ENCODE measurements at regions of chr12 and their contacts with region 1.

Region 1: GRCh38 chr12:49296034-49296835 is 1.3 kb downstream of the PRPH start:
- DNase-seq: peak; percentile 84
- ATAC-seq: peak; percentile 58
- H3K4me3 Mint-ChIP-seq: peak overlapping the region; percentile 67
- H3K27ac Mint-ChIP-seq: no peak overlapping the region
- H3K4me1 Mint-ChIP-seq: peaks cover 30% of the 10 kb centered on the region
- H3K27me3 Mint-ChIP-seq: peaks cover 91% of the 10 kb centered on the region
- CTCF ChIP-seq: peak; percentile 88

Region 2: DNA sequence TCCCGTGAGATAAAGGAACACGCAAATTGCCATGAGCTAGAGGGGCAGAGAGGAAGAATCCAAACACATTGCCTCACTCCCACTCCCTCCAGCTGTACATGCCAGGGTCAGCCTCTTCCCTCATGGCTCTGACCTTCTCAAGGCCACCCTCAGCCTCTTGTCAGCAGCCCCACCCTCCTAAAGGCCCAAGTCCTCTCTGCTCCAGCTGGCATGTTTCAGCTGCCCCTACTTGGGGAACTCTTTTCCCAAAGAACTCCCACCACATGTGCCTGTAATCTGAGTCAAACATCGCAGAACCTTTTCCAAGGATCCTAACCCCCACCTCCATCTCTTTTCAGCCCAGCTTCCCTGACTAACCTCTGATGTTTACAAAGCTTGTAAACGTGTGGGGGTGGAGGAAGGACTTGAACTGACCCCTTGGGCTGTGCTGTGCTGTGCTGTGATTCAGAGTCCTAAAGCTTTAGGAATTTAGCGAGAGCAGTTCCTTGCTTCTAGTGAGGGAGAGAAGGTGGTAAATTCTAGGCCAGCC is 485.3 kb before region 1 on chr12:
- CTCF ChIA-PET with region 1: no interaction called
- POLR2A ChIA-PET with region 1: no interaction called
- DNase-seq: no peak
- ATAC-seq: no peak
- H3K4me3 Mint-ChIP-seq: no peak overlapping the region
- H3K27ac Mint-ChIP-seq: no peak overlapping the region; the same call in 1 of the 2 replicates
- H3K4me1 Mint-ChIP-seq: peaks cover 27% of the 10 kb centered on the region
- H3K27me3 Mint-ChIP-seq: peaks cover 37% of the 10 kb centered on the region
- CTCF ChIP-seq: no peak

Region 3: DNA sequence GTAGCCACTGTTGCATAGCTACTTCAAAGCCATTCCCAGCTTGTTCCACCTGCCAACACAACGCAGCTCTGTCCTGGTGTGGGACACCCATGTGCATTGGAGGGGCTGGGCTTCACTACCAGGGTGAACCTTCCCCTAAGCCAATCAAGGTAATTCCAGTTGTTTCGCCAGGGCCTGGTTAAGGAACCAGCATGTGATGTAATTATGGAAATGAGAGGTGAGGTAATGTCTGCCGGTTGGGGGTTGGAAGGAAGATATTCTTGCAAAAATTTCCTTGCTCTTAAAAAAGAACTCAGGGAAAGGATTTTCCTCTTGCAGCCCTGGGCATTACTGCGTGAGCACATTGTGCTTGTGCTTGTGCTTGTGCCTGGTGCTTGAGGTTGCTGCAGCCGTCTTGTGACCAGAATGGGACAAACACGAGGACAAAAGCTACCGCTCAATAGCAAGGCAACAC is 16.5 kb before region 1 on chr12:
- CTCF ChIA-PET with region 1: interaction called, 97 read pairs
- POLR2A ChIA-PET with region 1: interaction called, 3 read pairs
- DNase-seq: no peak
- ATAC-seq: peak; percentile 53
- H3K4me3 Mint-ChIP-seq: no peak overlapping the region
- H3K27ac Mint-ChIP-seq: no peak overlapping the region
- H3K4me1 Mint-ChIP-seq: peaks cover 23% of the 10 kb centered on the region
- H3K27me3 Mint-ChIP-seq: no peaks in the 10 kb centered on the region
- CTCF ChIP-seq: no peak

Region 4: GRCh38 chr12:49309391-49309790 is 13.2 kb after region 1 on chr12:
- CTCF ChIA-PET with region 1: interaction called, 15 read pairs
- POLR2A ChIA-PET with region 1: no interaction called
- DNase-seq: no peak
- ATAC-seq: no peak
- H3K4me3 Mint-ChIP-seq: no peak overlapping the region
- H3K27ac Mint-ChIP-seq: no peak overlapping the region
- H3K4me1 Mint-ChIP-seq: no peaks in the 10 kb centered on the region
- H3K27me3 Mint-ChIP-seq: peaks cover 45% of the 10 kb centered on the region
- CTCF ChIP-seq: no peak

Region 5: GRCh38 chr12:49322708-49323523 is 26.7 kb after region 1 on chr12 and contains the start of gene TROAP:
- CTCF ChIA-PET with region 1: interaction called, 77 read pairs
- POLR2A ChIA-PET with region 1: interaction called, 3 read pairs
- DNase-seq: peak; percentile 99
- ATAC-seq: peak; percentile 99
- H3K4me3 Mint-ChIP-seq: peak within 1 kb of the TSS; percentile 99
- H3K27ac Mint-ChIP-seq: peak within 1 kb of the TSS; percentile 91
- H3K4me1 Mint-ChIP-seq: peaks cover 15% of the 10 kb centered on the region
- H3K27me3 Mint-ChIP-seq: peaks cover 15% of the 10 kb centered on the region
- CTCF ChIP-seq: no peak
- total RNA-seq, gene TROAP: 78.5 to 89.2 TPM (median 80.0 TPM) in 3 replicates

Region 6: DNA sequence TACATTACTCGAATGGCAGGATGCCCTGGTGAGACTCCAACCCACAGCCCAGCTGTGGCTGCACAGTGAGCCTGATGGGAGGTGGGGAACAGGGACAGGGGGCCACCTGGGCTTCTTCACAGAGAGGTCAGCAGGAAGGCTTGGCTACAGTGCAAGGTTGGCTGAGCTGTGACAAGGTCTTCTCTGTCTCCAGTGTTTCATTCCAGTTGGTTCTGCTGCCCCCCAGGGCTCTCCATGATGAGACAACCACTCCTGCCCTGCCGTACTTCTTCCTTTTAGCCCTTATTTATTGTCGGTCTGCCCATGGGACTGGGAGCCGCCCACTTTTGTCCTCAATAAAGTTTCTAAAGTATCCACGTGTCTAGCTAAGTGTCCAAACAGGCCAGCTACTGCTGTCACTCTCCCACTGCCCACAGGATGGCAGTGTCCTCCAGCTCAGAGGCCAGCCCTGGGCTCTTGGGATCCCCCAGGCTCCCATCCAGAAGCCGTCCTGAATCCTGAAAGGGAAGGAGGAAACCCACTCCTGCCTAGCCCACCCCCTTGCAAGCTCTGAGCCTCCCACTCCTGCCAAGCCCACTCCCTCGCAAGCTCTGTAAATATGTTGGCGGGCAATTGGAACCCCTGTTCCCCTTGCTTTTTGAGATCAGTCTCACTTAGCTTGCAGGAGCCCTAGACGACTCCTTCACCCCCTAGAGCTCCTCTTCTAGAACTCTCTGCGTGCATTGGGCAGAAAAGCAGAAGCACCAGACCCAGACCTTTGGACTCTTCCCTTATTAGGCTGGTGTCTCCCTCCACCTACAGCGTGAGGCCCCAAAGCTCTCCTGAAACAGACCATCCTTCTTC is 35.4 kb after region 1 on chr12:
- CTCF ChIA-PET with region 1: interaction called, 122 read pairs
- POLR2A ChIA-PET with region 1: no interaction called
- DNase-seq: peak; percentile 77
- ATAC-seq: peak; percentile 76
- H3K4me3 Mint-ChIP-seq: peak overlapping the region; percentile 77; the same call in 1 of the 2 replicates
- H3K27ac Mint-ChIP-seq: no peak overlapping the region
- H3K4me1 Mint-ChIP-seq: peaks cover 20% of the 10 kb centered on the region
- H3K27me3 Mint-ChIP-seq: peaks cover 52% of the 10 kb centered on the region
- CTCF ChIP-seq: peak; percentile 42; the same call in 1 of the 2 replicates

Region 7: DNA sequence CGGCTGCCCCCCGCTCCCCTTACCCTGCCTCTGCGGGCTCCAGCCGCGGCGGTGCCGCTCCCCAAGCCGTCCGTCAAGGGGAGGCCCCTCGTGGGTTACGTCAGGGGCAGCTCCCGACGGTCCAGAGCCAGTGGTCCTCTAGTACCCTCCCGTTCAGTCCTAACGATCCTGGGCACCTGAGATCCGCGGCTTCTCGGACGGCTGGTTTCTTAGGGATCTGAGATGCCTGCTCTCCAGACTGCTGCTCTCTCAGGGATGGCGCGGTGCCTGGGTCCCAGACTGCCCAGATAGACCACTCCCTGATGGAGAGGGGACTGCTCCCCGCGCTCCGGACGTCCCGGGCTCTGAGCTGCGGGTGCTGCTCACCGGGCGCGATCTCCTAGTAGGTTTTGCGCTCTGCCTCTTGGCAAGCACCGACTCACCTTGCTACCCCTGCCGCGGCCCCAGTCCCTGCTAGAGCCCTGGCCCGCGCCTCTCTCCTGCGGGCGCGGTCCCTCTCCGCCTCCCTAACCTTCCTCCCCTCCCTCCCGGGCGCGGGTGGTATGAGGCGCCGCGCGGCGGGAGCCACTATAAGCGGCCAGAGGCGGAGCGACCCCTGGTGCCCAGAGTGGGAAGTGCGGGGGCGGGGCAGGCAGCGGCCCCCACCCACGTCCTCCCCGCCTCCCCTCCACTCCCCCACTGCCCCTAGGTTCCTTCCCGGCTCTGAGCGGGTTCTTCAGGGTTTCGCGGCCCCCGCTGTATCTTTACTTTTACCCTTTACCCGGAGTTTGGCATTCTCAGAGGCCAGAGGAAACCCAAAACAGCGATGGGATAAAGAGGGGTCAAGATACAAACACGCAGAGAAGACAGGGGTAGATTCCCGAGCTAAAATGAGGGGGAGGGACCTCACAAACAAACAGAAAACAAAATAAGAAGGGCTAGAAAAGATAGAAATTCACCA is 40.7 kb after region 1 on chr12 and contains the start of gene C1QL4:
- CTCF ChIA-PET with region 1: interaction called, 264 read pairs
- POLR2A ChIA-PET with region 1: interaction called, 9 read pairs
- DNase-seq: peak; percentile 93
- ATAC-seq: peak; percentile 55
- H3K4me3 Mint-ChIP-seq: peak within 1 kb of the TSS; percentile 70
- H3K27ac Mint-ChIP-seq: no peak within 1 kb of the TSS
- H3K4me1 Mint-ChIP-seq: peaks cover 56% of the 10 kb centered on the region
- H3K27me3 Mint-ChIP-seq: peaks cover 99% of the 10 kb centered on the region
- CTCF ChIP-seq: peak; percentile 97
- total RNA-seq, gene C1QL4: 0.92 to 1.2 TPM (median 1.2 TPM) in 3 replicates

Region 8: DNA sequence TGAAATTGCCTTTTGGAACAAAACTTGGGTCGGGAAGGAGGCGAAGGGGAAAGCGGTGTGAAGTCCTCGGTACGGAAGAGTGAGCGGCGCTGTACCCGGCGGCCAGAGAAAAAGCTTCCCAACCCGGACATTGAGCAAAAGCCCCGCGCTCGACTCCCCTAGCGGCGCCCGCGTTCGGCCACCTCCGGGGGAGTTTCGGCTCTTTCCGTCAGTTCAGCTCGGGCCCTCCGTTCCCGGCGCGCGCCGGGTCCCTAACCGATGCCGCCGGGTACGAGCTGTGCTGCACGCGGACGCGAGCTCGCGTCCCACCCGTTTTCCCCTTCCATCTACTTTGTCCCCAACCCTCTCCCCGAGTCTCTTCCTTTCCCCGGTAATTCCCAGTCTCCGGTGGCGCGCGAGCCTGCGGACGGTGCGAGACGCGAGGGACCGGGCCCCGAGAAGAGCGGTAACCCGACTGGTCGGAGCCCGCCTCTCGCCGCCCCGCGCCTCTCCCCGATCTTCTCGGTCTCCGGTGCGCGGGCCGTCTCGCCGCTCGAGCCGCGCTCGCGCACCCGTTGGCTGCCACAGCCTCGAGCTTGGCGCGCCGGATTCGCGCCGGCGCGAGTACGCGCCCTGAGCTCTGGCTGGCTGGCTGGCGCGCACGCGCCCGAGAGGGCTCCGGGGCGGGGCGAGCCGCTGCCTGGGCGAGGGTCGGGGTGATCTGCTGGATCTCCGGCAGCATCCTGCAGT is 70.6 kb after region 1 on chr12:
- CTCF ChIA-PET with region 1: interaction called, 13 read pairs
- POLR2A ChIA-PET with region 1: no interaction called
- DNase-seq: peak; percentile 92
- ATAC-seq: peak; percentile 89
- H3K4me3 Mint-ChIP-seq: peak overlapping the region; percentile 89
- H3K27ac Mint-ChIP-seq: peak overlapping the region; percentile 97
- H3K4me1 Mint-ChIP-seq: peaks cover 30% of the 10 kb centered on the region
- H3K27me3 Mint-ChIP-seq: peaks cover 12% of the 10 kb centered on the region
- CTCF ChIP-seq: no peak

Measured in WTC11 (cell line).